IMR-90 (cell line): ENCODE measurements at regions of chr11 and their contacts with region 1.

Region 1: DNA sequence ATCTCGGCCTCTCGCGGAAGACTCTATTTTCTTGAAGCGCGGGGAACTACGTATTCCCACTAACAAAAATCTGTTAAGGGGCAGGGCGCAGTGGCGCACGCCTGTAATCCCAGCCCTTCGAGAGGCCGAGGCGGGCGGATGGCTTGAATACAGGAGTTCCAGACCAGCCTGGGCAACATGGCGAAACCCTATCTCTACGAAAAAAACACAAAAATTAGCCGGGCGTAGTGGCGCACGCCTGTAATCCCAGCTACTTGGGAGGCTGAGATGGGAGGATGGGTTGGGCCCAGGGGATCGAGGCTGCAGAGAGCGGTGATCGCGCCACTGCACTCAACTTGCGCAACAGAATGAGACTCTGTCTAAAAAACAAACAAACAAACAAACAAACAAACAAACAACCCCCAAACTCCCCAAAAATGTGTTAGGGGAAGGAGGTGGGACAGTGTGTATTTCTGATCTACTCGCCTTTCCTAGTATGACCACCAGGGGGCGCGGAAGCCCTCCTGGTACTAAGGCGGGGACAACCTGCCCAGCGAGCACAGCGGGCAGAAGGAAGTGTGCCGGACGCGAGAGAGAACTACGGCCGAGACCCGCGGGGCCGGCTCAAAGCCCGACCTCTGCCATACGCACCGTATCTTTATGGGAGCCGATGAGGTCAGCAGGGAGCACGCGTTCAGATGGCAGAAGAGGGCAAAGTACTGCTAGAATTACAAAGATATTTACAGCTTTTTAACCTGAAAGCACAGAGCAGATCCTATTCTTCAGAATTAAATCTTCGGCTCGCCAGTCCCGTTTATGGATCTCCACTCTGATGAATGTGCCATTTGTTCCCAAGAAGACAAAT is 1.3 kb upstream of the STX3 start:
- DNase-seq: peak; percentile 63
- ATAC-seq: peak; percentile 65
- H3K4me3 ChIP-seq: peak overlapping the region; percentile 83
- H3K27ac ChIP-seq: no peak overlapping the region
- H3K4me1 ChIP-seq: peaks cover 5% of the 10 kb centered on the region
- H3K27me3 ChIP-seq: no peaks in the 10 kb centered on the region
- CTCF ChIP-seq: peak; percentile 90
- POLR2A ChIP-seq: no peak
- RAD21 ChIP-seq: peak; percentile 75

Region 2: DNA sequence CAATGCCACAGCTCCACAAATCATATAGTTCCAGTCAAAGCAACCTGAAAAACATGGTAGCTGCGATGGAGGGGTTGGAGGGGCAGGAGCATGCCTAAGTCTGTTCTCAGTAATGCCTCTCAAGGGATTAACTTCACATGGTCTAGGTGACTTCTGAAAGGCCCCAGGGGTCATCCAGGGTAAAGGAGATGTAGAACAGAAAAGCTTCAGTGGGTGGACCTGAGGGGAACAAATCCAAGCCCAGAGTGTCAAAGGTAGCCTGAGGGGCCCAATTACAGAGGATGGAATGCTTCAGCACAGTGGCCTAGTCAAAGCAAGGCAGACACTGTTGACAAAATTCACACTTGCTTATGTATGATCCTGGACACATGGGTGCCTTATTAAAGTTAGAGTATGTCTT is 219.2 kb before region 1 on chr11:
- CTCF ChIA-PET with region 1: no interaction called
- POLR2A ChIA-PET with region 1: no interaction called
- dilution Hi-C with region 1: no loop called
- in situ Hi-C with region 1: no loop called
- intact Hi-C with region 1: loop called (anchors 5 kb)
- DNase-seq: no peak
- ATAC-seq: no peak
- H3K4me3 ChIP-seq: no peak overlapping the region
- H3K27ac ChIP-seq: no peak overlapping the region
- H3K4me1 ChIP-seq: no peaks in the 10 kb centered on the region
- H3K27me3 ChIP-seq: peaks cover 2% of the 10 kb centered on the region; the same call in 1 of the 2 replicates
- CTCF ChIP-seq: no peak
- POLR2A ChIP-seq: no peak
- RAD21 ChIP-seq: no peak

Region 3: GRCh38 chr11:59680287-59681154 is 73.4 kb before region 1 on chr11:
- CTCF ChIA-PET with region 1: no interaction called
- POLR2A ChIA-PET with region 1: no interaction called
- dilution Hi-C with region 1: no loop called
- in situ Hi-C with region 1: no loop called
- intact Hi-C with region 1: loop called (anchors 5 kb)
- DNase-seq: peak; percentile 83
- ATAC-seq: peak; percentile 100
- H3K4me3 ChIP-seq: no peak overlapping the region
- H3K27ac ChIP-seq: no peak overlapping the region
- H3K4me1 ChIP-seq: no peaks in the 10 kb centered on the region
- H3K27me3 ChIP-seq: no peaks in the 10 kb centered on the region
- CTCF ChIP-seq: peak; percentile 87
- POLR2A ChIP-seq: no peak
- RAD21 ChIP-seq: peak; percentile 88

Region 4: DNA sequence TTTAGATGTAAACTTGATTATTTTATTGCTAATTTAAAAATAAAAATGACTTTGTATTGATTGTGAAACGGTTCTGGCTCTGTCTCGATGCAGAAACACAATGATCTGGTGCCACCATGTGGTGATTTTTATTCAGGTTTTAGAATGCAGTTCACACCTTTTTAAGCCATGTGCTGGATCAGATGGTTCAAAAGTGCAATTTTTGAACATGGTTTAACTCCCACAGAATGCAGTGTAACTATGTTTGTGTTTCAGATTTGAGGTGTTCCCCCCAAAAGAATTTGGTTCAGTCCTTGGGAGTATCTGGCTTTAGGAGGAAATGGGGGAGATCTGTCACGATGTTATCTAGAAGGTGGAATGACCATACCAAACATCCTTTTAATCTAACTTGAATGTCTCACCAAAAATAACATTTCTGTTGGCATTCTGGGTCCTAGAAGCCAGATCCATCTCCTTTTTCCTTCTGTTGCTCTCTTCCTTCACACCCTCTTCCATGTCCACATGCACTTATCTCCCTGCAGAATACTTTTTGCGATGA is 48.8 kb after region 1 on chr11:
- CTCF ChIA-PET with region 1: interaction called, 5 read pairs
- POLR2A ChIA-PET with region 1: no interaction called
- dilution Hi-C with region 1: no loop called
- in situ Hi-C with region 1: loop called (anchors 5 kb)
- intact Hi-C with region 1: loop called (anchors 1 kb)
- DNase-seq: peak; percentile 58
- ATAC-seq: peak; percentile 79
- H3K4me3 ChIP-seq: no peak overlapping the region
- H3K27ac ChIP-seq: no peak overlapping the region
- H3K4me1 ChIP-seq: no peaks in the 10 kb centered on the region
- H3K27me3 ChIP-seq: no peaks in the 10 kb centered on the region
- CTCF ChIP-seq: peak; percentile 77
- POLR2A ChIP-seq: no peak
- RAD21 ChIP-seq: peak; percentile 84

Region 5: GRCh38 chr11:60193687-60194433 is 440.0 kb after region 1 on chr11:
- CTCF ChIA-PET with region 1: no interaction called
- POLR2A ChIA-PET with region 1: no interaction called
- dilution Hi-C with region 1: no loop called
- in situ Hi-C with region 1: no loop called
- intact Hi-C with region 1: loop called (anchors 5 kb)
- DNase-seq: peak; percentile 11
- ATAC-seq: peak; percentile 29; the same call in 1 of the 2 replicates
- H3K4me3 ChIP-seq: no peak overlapping the region
- H3K27ac ChIP-seq: no peak overlapping the region
- H3K4me1 ChIP-seq: no peaks in the 10 kb centered on the region
- H3K27me3 ChIP-seq: no peaks in the 10 kb centered on the region
- CTCF ChIP-seq: peak; percentile 89
- POLR2A ChIP-seq: no peak
- RAD21 ChIP-seq: peak; percentile 41